GM12878 (cell line): ENCODE measurements at regions of chr5 and their contacts with region 1.

Region 1: GRCh38 chr5:159286420-159287035 is 23.4 kb downstream of the UBLCP1 start:
- DNase-seq: no peak
- ATAC-seq: peak; percentile 56
- H3K4me3 ChIP-seq: no peak overlapping the region
- H3K27ac ChIP-seq: no peak overlapping the region
- H3K4me1 ChIP-seq: no peaks in the 10 kb centered on the region
- H3K27me3 ChIP-seq: no peaks in the 10 kb centered on the region
- CTCF ChIP-seq: peak; percentile 30 to 52 (median 36); a peak in 4 of 6 replicates
- EP300 ChIP-seq: no peak
- POLR2A ChIP-seq: no peak
- RAD21 ChIP-seq: peak; percentile 70

Region 2: GRCh38 chr5:159274676-159275075 is 11.9 kb before region 1 on chr5:
- CTCF ChIA-PET with region 1: interaction called, 10 read pairs
- POLR2A ChIA-PET with region 1: no interaction called
- RAD21 ChIA-PET with region 1: no interaction called
- SMC1A ChIA-PET with region 1: interaction called, 6 read pairs
- in situ Hi-C with region 1: no loop called
- intact Hi-C with region 1: no loop called
- DNase-seq: no peak
- ATAC-seq: no peak
- H3K4me3 ChIP-seq: no peak overlapping the region
- H3K27ac ChIP-seq: no peak overlapping the region
- H3K4me1 ChIP-seq: no peaks in the 10 kb centered on the region
- H3K27me3 ChIP-seq: no peaks in the 10 kb centered on the region
- CTCF ChIP-seq: no peak
- EP300 ChIP-seq: no peak
- POLR2A ChIP-seq: no peak
- RAD21 ChIP-seq: no peak

Region 3: DNA sequence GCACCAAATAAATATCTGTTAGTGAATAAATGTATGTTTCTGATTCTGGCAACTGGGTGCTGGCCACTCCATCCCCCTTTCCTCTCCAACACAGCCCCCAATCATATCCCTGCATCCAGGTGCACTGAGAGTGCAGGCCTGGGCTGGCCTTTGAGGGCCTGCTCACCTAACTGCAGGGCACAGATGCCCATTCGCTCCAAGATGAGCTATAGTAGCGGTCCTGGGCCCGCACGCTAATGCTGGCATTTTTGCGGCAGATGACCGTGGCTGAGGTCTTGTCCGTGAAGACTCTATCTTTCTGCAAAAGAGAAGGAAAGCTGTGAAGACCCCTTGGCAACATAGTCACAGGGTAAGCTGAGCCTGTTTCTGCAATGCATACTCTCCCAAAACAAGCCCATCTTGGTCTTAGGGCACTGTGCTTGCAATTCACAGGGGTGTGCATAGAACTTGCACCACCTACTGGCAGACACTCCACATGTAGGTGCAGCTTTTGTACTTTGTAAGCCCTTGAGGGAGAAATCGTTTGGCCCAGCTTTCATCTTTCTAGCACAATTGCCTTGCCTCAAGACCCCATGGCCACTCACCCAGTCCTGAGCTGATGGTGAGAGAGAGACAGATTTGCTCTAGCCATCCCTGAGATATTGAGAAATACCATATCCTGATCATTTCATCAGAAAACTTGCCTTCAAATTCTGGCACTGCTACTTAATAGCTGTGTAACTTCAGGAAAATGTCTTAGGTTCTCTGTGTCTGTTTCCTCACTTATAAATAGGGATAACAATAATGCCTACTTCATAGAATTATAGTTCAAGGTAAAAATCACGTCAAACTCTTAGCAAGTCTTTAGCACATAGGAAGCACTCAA is 30.2 kb after region 1 on chr5:
- CTCF ChIA-PET with region 1: interaction called, 70 read pairs
- POLR2A ChIA-PET with region 1: no interaction called
- RAD21 ChIA-PET with region 1: interaction called, 8 read pairs
- SMC1A ChIA-PET with region 1: interaction called, 19 read pairs
- in situ Hi-C with region 1: no loop called
- intact Hi-C with region 1: no loop called
- DNase-seq: no peak
- ATAC-seq: peak; percentile 98
- H3K4me3 ChIP-seq: no peak overlapping the region
- H3K27ac ChIP-seq: no peak overlapping the region
- H3K4me1 ChIP-seq: no peaks in the 10 kb centered on the region
- H3K27me3 ChIP-seq: no peaks in the 10 kb centered on the region
- CTCF ChIP-seq: peak; percentile 73 to 77 (median 76)
- EP300 ChIP-seq: no peak
- POLR2A ChIP-seq: no peak
- RAD21 ChIP-seq: peak; percentile 75

Region 4: GRCh38 chr5:159965031-159965837 is 678.7 kb after region 1 on chr5:
- CTCF ChIA-PET with region 1: interaction called, 3 read pairs
- POLR2A ChIA-PET with region 1: no interaction called
- RAD21 ChIA-PET with region 1: no interaction called
- SMC1A ChIA-PET with region 1: no interaction called
- in situ Hi-C with region 1: no loop called
- intact Hi-C with region 1: loop called (anchors 5 kb)
- DNase-seq: no peak
- ATAC-seq: peak; percentile 91
- H3K4me3 ChIP-seq: no peak overlapping the region
- H3K27ac ChIP-seq: no peak overlapping the region
- H3K4me1 ChIP-seq: no peaks in the 10 kb centered on the region
- H3K27me3 ChIP-seq: 0 out of 4 replicates have a peak, but pooled peaks cover 0 to 4% of the 10 kb centered on the region in 2 experiments
- CTCF ChIP-seq: peak; percentile 45 to 68 (median 59)
- EP300 ChIP-seq: no peak
- POLR2A ChIP-seq: no peak
- RAD21 ChIP-seq: peak; percentile 58

Region 5: DNA sequence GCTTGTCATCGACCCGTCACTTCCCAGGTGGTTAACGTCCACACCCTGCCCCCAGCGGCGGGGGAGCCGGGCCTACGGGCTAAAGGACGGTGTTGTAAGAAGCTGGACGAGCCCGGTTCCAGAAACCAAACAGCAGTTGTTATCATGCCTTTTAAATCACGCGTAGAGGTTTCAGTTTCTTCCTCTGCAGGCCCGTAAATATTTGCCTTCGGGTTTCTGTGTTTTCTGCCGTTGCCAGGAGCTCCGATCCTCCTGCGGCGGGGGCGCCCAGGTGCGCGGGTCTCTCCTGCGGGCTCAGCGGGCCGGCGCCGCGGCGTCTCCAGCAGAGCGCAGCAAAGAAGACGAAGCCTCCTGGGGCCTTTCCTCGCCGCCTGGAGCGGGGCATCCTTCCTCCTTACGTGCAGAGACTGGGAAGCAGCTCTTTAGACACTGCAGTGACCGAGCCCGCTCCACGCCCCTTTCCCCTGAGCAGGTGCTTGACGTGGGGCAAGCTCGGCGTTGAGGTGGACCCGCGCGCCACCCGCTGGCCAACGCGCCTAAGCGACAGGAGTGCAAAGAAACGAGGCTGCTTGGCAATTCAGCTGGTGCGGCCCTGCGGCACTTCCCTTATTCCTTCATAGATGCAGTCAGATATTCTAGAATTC is 700.6 kb after region 1 on chr5:
- CTCF ChIA-PET with region 1: interaction called, 13 read pairs
- POLR2A ChIA-PET with region 1: no interaction called
- RAD21 ChIA-PET with region 1: interaction called, 22 read pairs
- SMC1A ChIA-PET with region 1: interaction called, 7 read pairs
- in situ Hi-C with region 1: no loop called
- intact Hi-C with region 1: no loop called
- DNase-seq: peak; percentile 8
- ATAC-seq: peak; percentile 99
- H3K4me3 ChIP-seq: peak overlapping the region; percentile 58; the same call in 1 of the 2 replicates
- H3K27ac ChIP-seq: no peak overlapping the region
- H3K4me1 ChIP-seq: no peaks in the 10 kb centered on the region
- H3K27me3 ChIP-seq: peaks cover 3 to 4% of the 10 kb centered on the region in 2 experiments
- CTCF ChIP-seq: peak; percentile 77 to 86 (median 80)
- EP300 ChIP-seq: no peak
- POLR2A ChIP-seq: no peak
- RAD21 ChIP-seq: peak; percentile 75